ENCODE measurements at regions of chr3 and their contacts with region 1.

Region 1: DNA sequence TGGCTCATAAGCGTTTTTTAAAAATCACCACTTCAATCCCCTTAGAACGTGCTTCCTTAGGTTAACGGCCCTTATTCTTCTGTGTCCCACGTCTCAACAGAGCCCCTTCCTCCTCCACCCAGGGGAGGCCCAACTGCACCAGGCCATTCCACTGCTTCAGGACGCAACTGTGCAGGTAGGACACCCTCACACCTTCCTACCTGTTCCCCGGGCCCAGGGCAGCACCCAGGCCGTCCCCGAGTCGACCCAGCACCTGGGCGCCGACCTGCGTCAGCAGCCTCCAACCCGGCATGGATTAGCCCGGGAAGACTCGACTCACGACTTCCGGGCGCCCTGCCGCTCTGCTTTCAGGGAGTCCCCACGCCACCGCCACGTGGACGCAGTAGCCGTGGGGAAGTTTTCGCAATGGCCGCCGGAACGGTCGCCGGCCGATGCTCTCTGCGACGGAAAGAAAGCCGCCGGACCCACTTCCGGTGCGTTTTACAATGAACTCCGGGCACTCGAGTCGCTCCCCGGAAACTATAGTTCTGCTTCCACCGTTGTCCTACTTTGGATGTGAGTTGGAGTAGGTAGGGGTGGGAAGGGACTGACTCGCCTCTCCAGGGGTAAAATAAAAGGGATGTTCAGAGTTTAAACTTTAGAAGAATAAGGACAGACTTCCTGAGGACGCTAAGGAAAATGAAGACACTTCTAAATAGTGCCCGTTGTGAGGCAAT is at the start of gene MRPL3:
- DNase-seq: peak; percentile 84 to 85
- ATAC-seq: peak; percentile 95 to 98 (median 96)
- H3K4me3 ChIP-seq: peak within 1 kb of the TSS; percentile 71 to 90 (median 82)
- H3K27ac ChIP-seq: peak within 1 kb of the TSS; percentile 18 to 88 (median 76)
- H3K4me1 ChIP-seq: peaks cover 2 to 33% (median 21%) of the 10 kb centered on the region in 9 donors
- H3K27me3 ChIP-seq: peaks cover 0 to 7% (median 0%) of the 10 kb centered on the region in 7 donors
- CTCF ChIP-seq: peak in 1 of 9 donors; percentile 18
- total RNA-seq, gene MRPL3: 46.5 to 74.0 (median 51.2) TPM

Region 2: DNA sequence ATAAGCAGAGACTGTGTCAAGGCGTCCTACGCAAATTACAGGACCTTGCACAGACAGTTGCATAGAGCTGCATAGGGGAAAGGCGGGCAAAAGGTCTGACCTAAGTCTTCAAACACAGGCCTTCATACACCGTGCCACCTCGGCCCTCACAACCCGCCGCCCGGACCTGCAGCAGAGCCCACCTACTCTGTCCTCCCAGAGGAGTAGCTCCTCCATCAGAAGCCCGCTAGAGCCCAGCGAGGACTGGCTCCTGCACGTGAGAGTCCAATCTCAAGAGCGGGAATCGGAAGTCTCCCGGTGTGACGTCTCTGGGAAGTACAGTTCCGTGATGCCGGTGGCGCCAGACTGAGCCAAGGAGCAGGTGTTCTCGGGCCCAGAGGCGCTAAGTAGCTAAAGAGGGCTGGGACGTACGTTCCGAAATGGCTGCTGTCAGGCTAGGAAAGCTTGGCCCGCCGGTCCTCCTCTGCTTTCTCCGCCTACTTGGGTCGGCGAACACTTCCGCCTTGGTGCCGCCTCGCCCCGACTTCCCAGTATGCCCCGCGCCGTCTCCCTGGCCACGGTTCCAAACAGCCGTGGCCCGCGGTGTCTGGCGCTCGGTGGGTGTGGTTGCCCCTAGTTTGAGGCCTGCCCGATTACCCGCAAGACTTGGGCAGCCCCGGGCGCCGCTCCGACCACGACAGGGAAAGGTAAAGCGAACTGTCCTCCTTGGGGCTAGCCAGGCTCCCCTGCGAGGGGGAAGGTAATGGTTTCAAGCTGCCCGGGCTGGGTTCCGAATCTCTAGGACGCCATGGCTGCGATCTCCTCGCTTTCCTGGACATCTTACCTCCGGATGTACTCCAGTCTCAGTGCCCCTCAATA is 476.1 kb before region 1 on chr3 and contains the starts of genes ASTE1 and NEK11:
- intact Hi-C with region 1: loop called in 2 of 10 experiments (anchors 10 kb)
- DNase-seq: peak; percentile 89 to 91
- ATAC-seq: peak; percentile 99 to 100 (median 99)
- H3K4me3 ChIP-seq: peak within 1 kb of the TSS; percentile 26 to 86 (median 75)
- H3K27ac ChIP-seq: peak within 1 kb of the TSS in 9 of 10 donors; percentile 62 to 94 (median 89)
- H3K4me1 ChIP-seq: peaks cover 0 to 51% (median 39%) of the 10 kb centered on the region in 9 donors
- H3K27me3 ChIP-seq: no peaks in the 10 kb centered on the region
- CTCF ChIP-seq: no peak
- total RNA-seq, gene ASTE1: 1.5 to 4.5 (median 3.5) TPM
- total RNA-seq, gene NEK11: 1.3 to 3.7 (median 2.1) TPM

Region 3: DNA sequence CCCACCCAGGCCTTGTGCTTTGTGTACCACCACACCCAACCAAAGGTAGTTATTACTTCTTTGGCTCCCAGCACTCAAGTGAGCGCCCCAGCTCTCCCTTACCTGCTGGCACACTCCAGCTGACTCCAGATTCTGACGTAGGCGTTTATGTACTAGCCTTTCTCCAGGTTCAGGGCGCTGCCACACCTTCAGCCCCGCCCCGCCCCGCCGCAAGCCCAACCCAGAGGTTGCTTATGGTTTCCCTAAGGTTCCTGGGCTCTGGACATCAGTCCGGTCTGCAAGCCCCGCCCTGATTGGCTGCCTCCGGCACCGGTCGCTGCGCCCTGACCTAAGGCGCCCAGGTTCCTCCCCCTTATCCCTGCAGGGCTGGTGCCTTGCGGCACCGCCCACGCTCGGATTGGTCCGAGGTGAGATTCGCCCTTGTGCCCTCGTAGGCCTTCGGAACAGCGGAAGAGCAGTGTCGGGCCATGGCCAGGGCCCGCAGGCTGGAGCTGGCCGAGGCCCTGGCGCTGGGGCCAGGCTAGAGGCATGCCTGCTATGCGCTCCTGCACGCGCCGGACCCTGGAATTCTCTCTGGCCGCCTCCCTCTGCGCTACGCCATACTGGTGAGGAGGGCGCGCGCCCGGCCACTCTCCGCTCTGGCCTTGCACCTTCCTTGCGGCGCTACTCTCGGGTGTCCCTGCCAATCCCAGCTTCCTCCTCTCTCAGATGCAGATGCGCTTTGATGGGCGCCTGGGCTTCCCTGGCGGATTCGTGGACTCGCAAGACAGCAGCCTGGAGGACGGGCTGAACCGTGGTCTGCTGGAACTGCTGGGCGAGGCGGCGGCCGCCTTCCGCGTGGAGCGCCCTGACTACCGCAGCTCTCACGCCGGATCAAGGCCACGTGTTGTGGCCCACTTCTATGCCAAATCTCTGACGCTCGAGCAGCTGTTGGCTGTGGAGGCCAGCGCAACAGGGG is 140.9 kb before region 1 on chr3:
- intact Hi-C with region 1: loop called in 1 of 10 experiments (anchors 10 kb)
- DNase-seq: peak; percentile 80 to 86
- ATAC-seq: peak; percentile 92 to 98 (median 95)
- H3K4me3 ChIP-seq: peak overlapping the region; percentile 34 to 66 (median 56)
- H3K27ac ChIP-seq: peak overlapping the region; percentile 4 to 92 (median 87)
- H3K4me1 ChIP-seq: peaks cover 0 to 33% (median 13%) of the 10 kb centered on the region in 9 donors
- H3K27me3 ChIP-seq: no peaks in the 10 kb centered on the region
- CTCF ChIP-seq: no peak

Region 4: DNA sequence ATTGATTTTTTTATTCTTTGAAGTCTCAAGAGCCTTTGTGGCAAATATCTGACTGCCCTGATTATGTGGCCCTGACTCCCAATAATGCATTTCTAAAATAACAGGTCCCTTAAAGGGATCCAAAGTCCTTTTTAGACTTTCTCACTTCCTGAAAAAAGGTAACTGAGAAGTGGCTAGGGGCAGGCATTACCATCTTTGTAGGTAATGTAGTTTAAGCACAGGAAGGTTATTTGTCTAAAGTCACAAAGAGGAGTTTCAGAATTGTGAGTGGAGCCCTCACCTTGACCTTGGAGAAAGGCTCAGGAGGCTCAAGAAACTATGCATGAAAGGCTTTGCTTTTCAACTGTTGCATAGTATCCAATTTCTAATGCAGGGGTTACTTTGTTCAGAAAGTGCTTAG is 142.9 kb after region 1 on chr3:
- intact Hi-C with region 1: no loop called
- DNase-seq: no peak
- ATAC-seq: no peak
- H3K4me3 ChIP-seq: no peak overlapping the region
- H3K27ac ChIP-seq: no peak overlapping the region
- H3K4me1 ChIP-seq: no peaks in the 10 kb centered on the region
- H3K27me3 ChIP-seq: no peaks in the 10 kb centered on the region
- CTCF ChIP-seq: no peak